Activated CD8-positive, alpha-beta T cell treated with anti-CD3 and anti-CD28 coated beads for 36 hours (primary cell): ENCODE measurements at regions of chr11 and their contacts with region 1.

Region 1: DNA sequence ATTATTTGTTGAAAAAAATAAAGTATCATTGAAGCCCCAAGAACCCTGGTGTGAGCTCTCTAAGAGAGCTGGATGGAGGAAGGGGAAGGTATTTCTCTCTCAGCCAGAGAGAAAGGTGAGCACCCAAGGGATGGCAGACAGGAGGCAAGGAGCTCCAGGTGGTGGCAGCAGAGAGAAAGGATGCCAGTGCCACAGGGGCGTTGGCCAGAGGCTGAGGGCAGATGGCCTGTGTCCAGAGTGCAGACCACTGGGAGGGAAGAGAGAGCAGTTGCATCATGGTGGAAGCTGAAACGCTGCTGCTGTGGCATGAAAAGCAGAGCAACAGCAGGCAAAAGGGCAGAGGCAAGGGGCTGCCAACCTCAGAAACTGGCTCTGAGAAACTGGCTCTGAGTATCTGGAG is 8.5 kb downstream of the SPON1 start:
- DNase-seq: peak; percentile 30
- ATAC-seq: peak; percentile 27
- H3K4me3 Mint-ChIP-seq: no peak overlapping the region
- H3K27ac Mint-ChIP-seq: no peak overlapping the region
- H3K4me1 Mint-ChIP-seq: peaks cover 16% of the 10 kb centered on the region
- H3K27me3 Mint-ChIP-seq: peaks cover 8% of the 10 kb centered on the region
- CTCF ChIP-seq: peak; percentile 32

Region 2: DNA sequence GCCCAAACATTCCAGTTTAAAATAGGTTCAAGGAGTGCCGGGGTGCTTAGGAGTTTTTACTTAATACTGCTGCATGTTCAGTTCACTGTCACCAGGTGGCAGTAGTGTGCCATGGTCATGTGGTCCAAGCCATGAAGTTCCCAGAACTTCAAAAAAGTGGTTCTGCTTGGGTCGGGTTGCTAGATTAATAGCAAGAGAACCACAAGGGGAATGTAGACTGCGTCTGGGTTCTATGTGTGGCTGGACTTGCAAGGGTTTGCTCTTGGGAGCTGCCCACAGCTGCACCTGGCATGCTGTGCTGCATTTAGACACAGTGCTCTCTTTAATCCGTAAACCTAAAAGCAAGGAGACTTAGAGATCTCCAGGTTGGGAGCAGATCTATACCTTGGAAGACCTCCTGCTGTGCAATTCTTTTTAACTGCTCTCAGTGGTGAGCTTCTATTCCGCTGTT is 15.0 kb before region 1 on chr11:
- CTCF ChIA-PET with region 1: interaction called, 11 read pairs
- POLR2A ChIA-PET with region 1: no interaction called
- intact Hi-C with region 1: no loop called
- DNase-seq: peak; percentile 70
- ATAC-seq: peak; percentile 69
- H3K4me3 Mint-ChIP-seq: no peak overlapping the region
- H3K27ac Mint-ChIP-seq: no peak overlapping the region
- H3K4me1 Mint-ChIP-seq: no peaks in the 10 kb centered on the region
- H3K27me3 Mint-ChIP-seq: peaks cover 8% of the 10 kb centered on the region
- CTCF ChIP-seq: peak; percentile 92

Region 3: GRCh38 chr11:14101388-14101787 is 130.4 kb after region 1 on chr11:
- CTCF ChIA-PET with region 1: no interaction called
- POLR2A ChIA-PET with region 1: no interaction called
- intact Hi-C with region 1: no loop called
- DNase-seq: no peak
- ATAC-seq: peak; percentile 64
- H3K4me3 Mint-ChIP-seq: no peak overlapping the region
- H3K27ac Mint-ChIP-seq: peak overlapping the region; percentile 62
- H3K4me1 Mint-ChIP-seq: peaks cover 20% of the 10 kb centered on the region
- H3K27me3 Mint-ChIP-seq: no peaks in the 10 kb centered on the region
- CTCF ChIP-seq: no peak